Body of pancreas (tissue), 4 donors: ENCODE measurements at regions of chr7 and their contacts with region 1.

Region 1: DNA sequence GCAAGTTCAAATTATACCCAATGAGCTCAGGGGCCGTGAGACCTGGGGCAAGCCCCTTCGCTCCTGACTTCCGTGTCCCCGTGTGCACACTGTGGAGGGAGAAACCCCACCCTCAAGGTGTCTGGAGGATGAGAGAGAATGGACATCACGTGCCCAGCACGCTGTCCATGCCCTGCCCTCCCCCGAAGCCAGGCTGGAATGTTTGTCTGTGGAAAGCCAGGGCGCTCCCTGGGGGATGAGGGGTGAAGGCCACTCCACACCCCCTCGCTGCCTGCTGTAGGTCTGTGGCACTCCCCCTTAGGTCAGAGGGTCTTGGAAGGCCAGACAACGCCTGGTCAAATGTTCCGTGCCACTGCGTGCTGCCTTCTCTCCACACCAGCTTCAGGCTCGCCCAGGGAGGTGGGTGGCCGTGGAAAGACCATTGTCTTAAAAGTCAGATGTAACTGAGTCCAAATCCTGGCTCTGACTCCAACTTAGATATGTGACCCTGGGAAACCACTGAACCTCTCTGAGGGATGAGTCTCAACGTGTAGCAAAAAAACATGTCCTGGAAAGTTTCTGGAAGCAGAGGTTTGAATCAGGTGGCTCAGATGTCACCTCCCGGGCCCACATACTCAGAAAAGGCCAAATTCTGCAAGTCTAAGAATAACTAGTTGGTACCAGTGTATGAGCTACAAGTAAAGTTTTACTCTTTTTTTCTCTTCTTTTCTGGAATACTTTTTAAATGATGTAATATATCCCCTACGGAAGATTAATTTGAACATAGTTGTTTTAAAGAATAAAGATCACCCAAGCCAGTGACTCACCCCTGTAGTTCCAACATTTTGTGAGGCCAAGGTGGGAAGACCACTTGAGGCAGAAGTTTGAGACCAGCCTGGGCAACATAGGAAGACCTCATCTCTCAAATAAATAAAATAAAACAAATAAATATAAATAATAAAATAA is 24.9 kb downstream of the RCC1L start:
- DNase-seq: no peak
- ATAC-seq: no peak
- H3K4me3 ChIP-seq: no peak overlapping the region
- H3K27ac ChIP-seq: no peak overlapping the region
- H3K4me1 ChIP-seq: no peaks in the 10 kb centered on the region
- H3K27me3 ChIP-seq: no peaks in the 10 kb centered on the region
- CTCF ChIP-seq: no peak
- POLR2A ChIP-seq: no peak

Region 2: GRCh38 chr7:74417419-74417971 is 631.2 kb before region 1 on chr7:
- intact Hi-C with region 1: loop called (anchors 10 kb)
- DNase-seq: peak; percentile 66 to 71 (median 68)
- ATAC-seq: peak; percentile 92
- H3K4me3 ChIP-seq: no peak overlapping the region
- H3K27ac ChIP-seq: no peak overlapping the region
- H3K4me1 ChIP-seq: peaks cover 7% of the 10 kb centered on the region
- H3K27me3 ChIP-seq: no peaks in the 10 kb centered on the region
- CTCF ChIP-seq: peak; percentile 85 to 98 (median 93)
- POLR2A ChIP-seq: no peak

Region 3: GRCh38 chr7:74985531-74985930 is 63.2 kb before region 1 on chr7:
- intact Hi-C with region 1: no loop called
- DNase-seq: no peak
- ATAC-seq: no peak
- H3K4me3 ChIP-seq: no peak overlapping the region
- H3K27ac ChIP-seq: no peak overlapping the region
- H3K4me1 ChIP-seq: no peaks in the 10 kb centered on the region
- H3K27me3 ChIP-seq: no peaks in the 10 kb centered on the region
- CTCF ChIP-seq: no peak
- POLR2A ChIP-seq: no peak